ENCODE measurements at regions of chr1 and their contacts with region 1.

Region 1: GRCh38 chr1:179002552-179003345 is 22.9 kb upstream of the FAM20B start:
- DNase-seq: peak; percentile 82

Region 2: GRCh38 chr1:178529364-178530036 is 473.2 kb before region 1 on chr1:
- in situ Hi-C with region 1: loop called (anchors 10 kb)
- DNase-seq: no peak

Region 3: DNA sequence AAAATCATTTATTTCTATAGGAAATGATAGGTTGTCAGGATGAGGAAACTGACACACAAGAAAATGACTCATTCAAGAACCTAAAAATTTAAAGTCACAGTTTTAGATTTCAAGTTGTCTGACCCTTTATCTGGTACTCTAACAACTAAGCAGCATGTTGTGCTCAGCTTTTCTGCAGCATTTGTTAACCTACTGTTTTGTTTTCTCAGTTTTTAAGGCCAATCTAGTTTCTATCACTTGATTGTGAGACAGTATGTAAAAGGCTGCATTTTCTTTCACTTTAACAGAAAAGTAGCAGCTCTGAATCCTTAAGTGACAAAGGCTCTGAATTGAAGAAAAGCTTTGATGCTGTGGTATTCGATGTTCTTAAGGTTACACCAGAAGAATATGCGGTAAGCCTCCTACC is 218.6 kb before region 1 on chr1:
- in situ Hi-C with region 1: loop called (anchors 25 kb)
- DNase-seq: no peak